ENCODE measurements at regions of chr17 and their contacts with region 1.

Region 1: GRCh38 chr17:82551779-82552457 is 32.4 kb downstream of the FOXK2 start:
- DNase-seq: peak; percentile 79 to 89 (median 88)
- H3K4me3 ChIP-seq: no peak overlapping the region
- H3K27ac ChIP-seq: no peak overlapping the region
- H3K4me1 ChIP-seq: peaks cover 0 to 37% (median 32%) of the 10 kb centered on the region in 4 experiments
- H3K27me3 ChIP-seq: no peaks in the 10 kb centered on the region

Region 2: GRCh38 chr17:82480318-82480717 is 71.6 kb before region 1 on chr17:
- CTCF ChIA-PET with region 1: interaction called, 12 read pairs
- POLR2A ChIA-PET with region 1: no interaction called
- DNase-seq: no peak
- H3K4me3 ChIP-seq: no peak overlapping the region
- H3K27ac ChIP-seq: no peak overlapping the region
- H3K4me1 ChIP-seq: peaks cover 0 to 11% (median 0%) of the 10 kb centered on the region in 4 experiments
- H3K27me3 ChIP-seq: no peaks in the 10 kb centered on the region

Region 3: DNA sequence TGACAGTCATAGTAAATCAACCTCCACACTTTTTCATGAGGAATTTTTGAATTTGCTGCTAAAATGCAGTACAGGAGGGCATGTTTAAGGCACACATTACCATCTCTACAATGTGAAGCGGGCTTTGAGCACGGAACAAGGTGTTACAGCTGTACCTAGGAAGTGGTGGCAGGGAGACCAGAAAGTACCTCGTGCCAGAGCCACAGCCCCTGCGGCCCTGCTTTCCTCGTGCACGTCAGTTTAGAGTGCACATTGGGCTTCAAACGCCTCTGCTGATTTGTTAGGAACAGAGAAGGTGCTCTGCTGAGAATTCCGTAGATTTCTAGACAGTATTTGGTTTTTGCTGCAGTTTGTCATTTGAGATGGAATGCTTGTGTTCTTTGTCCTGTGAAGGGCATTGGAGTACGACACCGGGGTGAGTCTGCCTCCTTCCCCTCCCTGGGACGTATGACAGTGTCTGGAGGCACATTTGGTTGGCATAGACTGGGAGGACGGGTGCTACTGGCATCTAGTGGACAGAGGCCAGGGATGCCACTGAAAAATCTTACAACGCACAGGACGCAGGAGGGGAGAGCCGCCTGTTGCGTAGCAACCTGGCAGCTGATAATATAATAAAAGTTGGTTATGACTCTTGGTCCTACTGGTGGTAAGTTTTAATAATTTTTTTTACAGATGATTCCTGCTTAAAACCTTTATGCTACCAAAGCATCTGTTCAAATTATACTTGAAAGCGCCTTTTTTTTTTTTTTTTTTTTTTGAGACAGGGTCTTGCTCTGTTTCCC is 23.2 kb before region 1 on chr17:
- CTCF ChIA-PET with region 1: interaction called, 161 read pairs
- POLR2A ChIA-PET with region 1: no interaction called
- DNase-seq: peak; percentile 76 to 88 (median 83)
- H3K4me3 ChIP-seq: no peak overlapping the region
- H3K27ac ChIP-seq: no peak overlapping the region
- H3K4me1 ChIP-seq: peaks cover 0 to 20% (median 10%) of the 10 kb centered on the region in 4 experiments
- H3K27me3 ChIP-seq: no peaks in the 10 kb centered on the region

Region 4: GRCh38 chr17:82636626-82637598 is 85.0 kb after region 1 on chr17:
- CTCF ChIA-PET with region 1: no interaction called
- POLR2A ChIA-PET with region 1: no interaction called
- DNase-seq: peak in 1 of 3 donors; percentile 21
- H3K4me3 ChIP-seq: no peak overlapping the region
- H3K27ac ChIP-seq: no peak overlapping the region
- H3K4me1 ChIP-seq: peaks cover 0 to 22% (median 10%) of the 10 kb centered on the region in 4 experiments
- H3K27me3 ChIP-seq: no peaks in the 10 kb centered on the region

Measured in common myeloid progenitor, CD34-positive (primary cell).